Panc1 (cell line): ENCODE measurements at regions of chr1 and their contacts with region 1.

Region 1: DNA sequence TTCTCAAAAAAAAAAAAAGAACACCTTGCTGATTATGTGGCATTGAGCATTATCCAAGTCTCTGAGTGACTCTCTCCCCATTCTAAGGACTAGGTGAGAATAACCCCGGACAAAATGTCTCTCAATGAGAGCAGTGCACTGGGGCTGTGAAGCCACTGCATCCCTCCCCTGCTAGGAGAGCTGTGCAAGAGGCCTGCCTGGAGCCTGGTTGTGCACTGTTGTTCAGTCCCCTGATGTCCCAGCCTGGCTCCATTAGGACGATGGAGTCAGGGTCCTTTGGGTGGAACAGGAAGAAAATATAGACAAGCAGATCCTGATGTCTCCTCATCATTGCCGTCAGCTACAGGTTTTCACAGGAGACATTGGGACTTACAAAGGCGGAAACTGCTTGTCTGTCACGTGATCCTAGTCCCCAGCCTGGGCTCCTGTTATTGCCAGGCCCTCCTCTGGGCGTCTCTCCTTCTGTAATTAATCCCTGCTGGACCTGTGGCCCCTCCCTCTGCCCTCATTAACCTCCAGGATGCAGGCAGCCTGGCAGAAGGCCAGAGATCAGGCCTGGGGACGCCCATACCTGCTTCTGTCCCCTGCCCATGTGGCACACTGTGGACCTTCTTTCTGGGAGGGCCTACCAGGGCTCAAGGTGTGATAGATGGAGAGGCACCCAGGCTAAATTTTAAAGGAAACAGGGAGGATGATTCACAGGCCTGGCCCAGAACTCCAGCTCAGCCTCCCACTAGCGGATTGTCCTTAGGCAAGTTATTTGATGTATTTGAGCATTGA is 2.4 kb upstream of the S100A6 start:
- DNase-seq: no peak
- ATAC-seq: no peak
- H3K4me3 ChIP-seq: no peak overlapping the region
- H3K27ac ChIP-seq: peak overlapping the region; percentile 96
- H3K4me1 ChIP-seq: peaks cover 71% of the 10 kb centered on the region
- H3K27me3 ChIP-seq: no peaks in the 10 kb centered on the region
- CTCF ChIP-seq: no peak

Region 2: DNA sequence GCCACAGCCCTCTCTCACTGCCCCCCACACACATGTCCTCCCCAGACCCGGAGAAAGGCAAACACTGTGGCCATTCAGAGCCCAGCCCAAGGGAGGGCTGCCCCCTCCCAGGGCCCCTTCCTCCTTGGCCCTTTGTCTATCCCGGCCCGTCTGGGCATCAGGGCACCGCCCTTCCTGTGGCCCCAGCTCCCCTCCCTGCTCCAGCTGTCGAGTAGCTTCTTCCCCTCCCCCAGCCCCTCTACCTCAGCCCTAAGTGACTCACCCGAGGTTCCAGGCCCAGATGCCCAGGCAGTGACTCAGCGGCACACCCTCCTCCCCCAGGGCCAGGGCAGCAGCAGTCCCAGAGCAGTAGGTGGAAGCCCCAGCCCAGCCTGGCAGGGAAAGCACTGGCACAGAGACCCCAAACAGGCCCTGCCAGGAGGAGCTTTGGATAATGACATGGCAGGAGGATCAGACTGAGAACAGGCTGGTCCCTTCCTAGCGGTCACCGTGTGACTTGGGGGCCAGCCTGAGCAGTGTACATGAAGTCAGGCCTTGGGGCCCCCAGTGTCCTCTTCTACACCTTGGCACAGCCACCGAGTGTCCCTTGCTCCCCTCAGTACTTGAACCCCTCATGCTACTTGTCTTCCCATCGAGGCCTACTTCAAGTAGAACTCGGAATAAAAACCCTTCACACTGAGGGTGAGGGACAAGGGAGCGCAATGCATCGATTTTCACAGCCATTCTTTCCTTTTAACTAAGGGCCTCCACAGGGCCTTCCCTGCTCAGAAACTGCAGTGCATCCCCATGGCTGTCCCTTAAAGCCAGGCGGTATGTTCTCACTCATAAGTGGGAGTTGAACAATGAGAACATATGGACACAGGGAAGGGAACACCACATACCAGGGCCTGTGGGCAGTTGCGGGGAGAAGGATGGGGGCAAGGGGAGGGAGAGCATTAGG is 28.5 kb after region 1 on chr1:
- CTCF ChIA-PET with region 1: interaction called, 16 read pairs
- POLR2A ChIA-PET with region 1: interaction called, 16 read pairs
- in situ Hi-C with region 1: no loop called
- intact Hi-C with region 1: loop called (anchors 1 kb)
- DNase-seq: peak; percentile 94
- ATAC-seq: peak; percentile 90
- H3K4me3 ChIP-seq: peak overlapping the region in 1 of 2 experiments; percentile 18; a peak in 1 of 4 replicates
- H3K27ac ChIP-seq: peak overlapping the region; percentile 100
- H3K4me1 ChIP-seq: peaks cover 56% of the 10 kb centered on the region
- H3K27me3 ChIP-seq: no peaks in the 10 kb centered on the region
- CTCF ChIP-seq: no peak

Region 3: DNA sequence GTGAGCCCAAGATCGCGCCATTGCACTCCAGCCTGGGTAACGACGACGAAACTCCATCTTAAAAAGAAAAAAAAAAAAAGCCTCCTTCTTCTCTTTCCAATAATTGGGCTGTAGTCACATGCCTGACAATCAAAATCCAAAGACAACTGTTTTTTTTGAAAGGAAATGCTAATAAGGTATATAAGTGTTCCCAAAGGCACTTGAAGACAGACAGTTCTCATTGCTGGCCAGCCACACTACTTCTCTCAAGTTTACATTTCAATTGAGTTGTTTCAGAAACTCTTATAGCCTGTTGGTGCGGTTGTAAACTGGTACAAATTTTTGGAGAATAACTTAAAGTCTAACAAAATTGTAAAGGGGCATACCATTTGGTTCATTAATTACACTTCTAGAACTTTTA is 361.3 kb after region 1 on chr1:
- CTCF ChIA-PET with region 1: no interaction called
- POLR2A ChIA-PET with region 1: no interaction called
- in situ Hi-C with region 1: no loop called
- intact Hi-C with region 1: no loop called
- DNase-seq: no peak
- ATAC-seq: no peak
- H3K4me3 ChIP-seq: no peak overlapping the region
- H3K27ac ChIP-seq: no peak overlapping the region
- H3K4me1 ChIP-seq: no peaks in the 10 kb centered on the region
- H3K27me3 ChIP-seq: no peaks in the 10 kb centered on the region
- CTCF ChIP-seq: no peak